GM12878 (cell line): ENCODE measurements at regions of chr1 and their contacts with region 1.

Region 1: DNA sequence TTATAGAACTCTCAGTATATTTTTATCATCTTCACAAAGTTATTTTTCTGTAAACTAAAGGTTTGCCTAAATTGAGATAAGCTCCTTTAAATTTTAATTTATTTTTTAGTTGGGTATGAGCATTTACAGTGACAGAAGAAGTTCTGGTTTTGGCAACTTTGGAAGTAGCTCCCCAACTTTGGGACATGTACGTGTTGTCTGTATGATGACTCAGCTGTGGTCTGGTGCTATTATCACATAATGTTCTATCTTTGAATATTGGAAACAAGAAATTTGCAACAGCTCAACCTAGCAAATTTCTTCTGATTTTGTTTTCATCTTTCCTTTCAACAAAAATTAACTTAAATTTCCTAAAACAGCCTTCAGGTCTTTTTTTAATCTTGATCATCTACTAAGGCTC is 46.6 kb upstream of the C1orf105 start:
- DNase-seq: no peak
- ATAC-seq: no peak; the same call in 2 of the 3 replicates
- H3K4me3 ChIP-seq: no peak overlapping the region
- H3K27ac ChIP-seq: no peak overlapping the region
- H3K4me1 ChIP-seq: peaks cover 4% of the 10 kb centered on the region; the same call in 1 of the 2 replicates
- H3K27me3 ChIP-seq: no peaks in the 10 kb centered on the region
- CTCF ChIP-seq: no peak
- EP300 ChIP-seq: no peak
- POLR2A ChIP-seq: no peak
- RAD21 ChIP-seq: no peak

Region 2: DNA sequence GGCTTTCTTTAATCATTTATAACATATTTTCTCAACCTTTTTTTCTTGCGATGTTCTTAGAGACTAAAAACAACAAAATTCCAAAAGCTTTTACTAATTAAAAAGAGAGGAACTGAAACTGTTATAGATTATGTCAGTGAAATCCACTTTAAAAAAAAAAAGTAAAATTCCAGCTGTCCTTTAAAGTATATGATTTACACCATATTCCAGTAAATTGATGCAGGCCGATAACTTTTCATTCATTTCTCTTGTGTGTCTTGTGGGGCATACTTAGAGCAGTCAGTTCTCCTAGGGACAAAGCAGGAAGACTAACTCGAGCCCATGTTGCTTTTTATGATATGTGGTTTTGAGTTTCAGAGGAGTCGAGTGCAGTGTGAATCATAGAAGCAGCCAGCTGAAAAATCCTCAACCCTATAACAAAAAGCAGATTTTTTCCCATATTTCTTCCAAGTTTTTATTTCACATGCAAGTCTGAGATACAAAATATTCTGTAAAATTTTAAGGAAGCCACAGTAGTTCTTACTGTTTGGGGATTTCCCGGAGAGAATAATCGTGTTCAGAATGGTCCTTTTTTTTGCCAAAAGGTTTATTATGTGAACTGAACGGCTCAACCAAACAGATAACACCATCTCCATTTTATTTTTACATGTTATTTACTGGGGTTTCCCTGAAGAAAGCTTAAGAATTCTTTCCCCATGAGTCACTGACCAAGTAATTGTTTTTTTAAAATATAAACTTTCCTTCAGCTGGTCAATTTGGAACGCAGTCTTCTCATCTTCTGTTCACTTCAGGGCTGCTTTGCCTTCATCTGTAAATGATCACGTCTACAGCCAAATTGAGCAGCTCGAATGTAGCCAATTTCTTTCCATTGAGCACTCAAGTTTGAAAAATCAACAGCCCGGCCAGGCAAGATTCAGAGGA is 30.4 kb before region 1 on chr1:
- CTCF ChIA-PET with region 1: interaction called, 32 read pairs
- POLR2A ChIA-PET with region 1: interaction called, 5 read pairs
- RAD21 ChIA-PET with region 1: interaction called, 16 read pairs
- SMC1A ChIA-PET with region 1: interaction called, 222 read pairs
- in situ Hi-C with region 1: no loop called
- intact Hi-C with region 1: no loop called
- DNase-seq: no peak
- ATAC-seq: peak; percentile 37
- H3K4me3 ChIP-seq: no peak overlapping the region
- H3K27ac ChIP-seq: peak overlapping the region; percentile 98
- H3K4me1 ChIP-seq: peaks cover 58% of the 10 kb centered on the region
- H3K27me3 ChIP-seq: no peaks in the 10 kb centered on the region
- CTCF ChIP-seq: no peak
- EP300 ChIP-seq: peak in 1 of 2 experiments; percentile 13; a peak in 1 of 4 replicates
- POLR2A ChIP-seq: no peak
- RAD21 ChIP-seq: no peak

Region 3: GRCh38 chr1:172537827-172538391 is 164.0 kb after region 1 on chr1:
- CTCF ChIA-PET with region 1: no interaction called
- POLR2A ChIA-PET with region 1: no interaction called
- RAD21 ChIA-PET with region 1: no interaction called
- SMC1A ChIA-PET with region 1: no interaction called
- in situ Hi-C with region 1: no loop called
- intact Hi-C with region 1: no loop called
- DNase-seq: no peak
- ATAC-seq: no peak
- H3K4me3 ChIP-seq: peak overlapping the region; percentile 52
- H3K27ac ChIP-seq: no peak overlapping the region
- H3K4me1 ChIP-seq: no peaks in the 10 kb centered on the region
- H3K27me3 ChIP-seq: no peaks in the 10 kb centered on the region
- CTCF ChIP-seq: no peak
- EP300 ChIP-seq: no peak
- POLR2A ChIP-seq: no peak
- RAD21 ChIP-seq: no peak